Caco-2 (cell line): ENCODE measurements at regions of chr17 and their contacts with region 1.

Region 1: GRCh38 chr17:20184191-20184590 is 175.0 kb downstream of the SPECC1 start:
- DNase-seq: no peak
- H3K4me3 ChIP-seq: no peak overlapping the region
- H3K4me3 Mint-ChIP-seq: no peak overlapping the region
- H3K27ac Mint-ChIP-seq: no peak overlapping the region
- H3K4me1 ChIP-seq: peaks cover 7% of the 10 kb centered on the region
- H3K4me1 Mint-ChIP-seq: peaks cover 16% of the 10 kb centered on the region
- H3K27me3 ChIP-seq: no peaks in the 10 kb centered on the region
- H3K27me3 Mint-ChIP-seq: no peaks in the 10 kb centered on the region
- CTCF ChIP-seq: no peak

Region 2: GRCh38 chr17:20073055-20073979 is 110.9 kb before region 1 on chr17:
- CTCF ChIA-PET with region 1: no interaction called
- POLR2A ChIA-PET with region 1: no interaction called
- intact Hi-C with region 1: no loop called
- DNase-seq: no peak
- H3K4me3 ChIP-seq: no peak overlapping the region
- H3K4me3 Mint-ChIP-seq: no peak overlapping the region
- H3K27ac Mint-ChIP-seq: no peak overlapping the region
- H3K4me1 ChIP-seq: no peaks in the 10 kb centered on the region
- H3K4me1 Mint-ChIP-seq: no peaks in the 10 kb centered on the region
- H3K27me3 ChIP-seq: no peaks in the 10 kb centered on the region
- H3K27me3 Mint-ChIP-seq: peaks cover 20% of the 10 kb centered on the region
- CTCF ChIP-seq: no peak

Region 3: DNA sequence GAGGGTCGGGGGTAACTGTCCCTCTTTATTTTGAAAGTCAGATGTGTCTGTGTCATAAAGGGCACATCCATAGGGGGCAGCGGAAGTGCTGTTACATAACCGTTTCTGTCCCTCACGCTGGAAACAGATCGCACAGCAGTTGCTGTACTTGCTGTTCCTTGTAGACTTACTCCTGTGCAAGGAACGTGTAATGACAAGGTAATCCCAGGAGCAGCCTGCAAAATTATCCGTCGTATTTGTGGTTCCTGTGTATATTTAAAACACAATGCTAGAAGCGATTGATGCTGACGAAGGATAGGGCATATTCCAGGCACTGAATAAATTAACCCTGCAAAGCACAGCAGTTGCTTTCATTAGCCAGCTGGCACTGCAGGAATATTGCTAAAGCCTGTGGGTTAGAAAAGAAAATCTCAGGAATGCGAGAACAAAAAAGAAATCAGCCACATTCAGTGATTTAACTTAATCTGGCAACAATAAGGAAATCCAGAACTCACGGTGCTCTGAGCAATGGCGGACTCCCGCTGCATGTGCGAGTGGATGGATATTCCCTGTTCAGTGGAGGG is 98.8 kb before region 1 on chr17:
- CTCF ChIA-PET with region 1: no interaction called
- POLR2A ChIA-PET with region 1: no interaction called
- intact Hi-C with region 1: no loop called
- DNase-seq: no peak
- H3K4me3 ChIP-seq: no peak overlapping the region
- H3K4me3 Mint-ChIP-seq: no peak overlapping the region
- H3K27ac Mint-ChIP-seq: no peak overlapping the region
- H3K4me1 ChIP-seq: no peaks in the 10 kb centered on the region
- H3K4me1 Mint-ChIP-seq: no peaks in the 10 kb centered on the region
- H3K27me3 ChIP-seq: no peaks in the 10 kb centered on the region
- H3K27me3 Mint-ChIP-seq: peaks cover 15% of the 10 kb centered on the region
- CTCF ChIP-seq: no peak

Region 4: GRCh38 chr17:20141198-20141972 is 42.8 kb before region 1 on chr17:
- CTCF ChIA-PET with region 1: no interaction called
- POLR2A ChIA-PET with region 1: no interaction called
- intact Hi-C with region 1: no loop called
- DNase-seq: no peak
- H3K4me3 ChIP-seq: no peak overlapping the region
- H3K4me3 Mint-ChIP-seq: no peak overlapping the region
- H3K27ac Mint-ChIP-seq: no peak overlapping the region
- H3K4me1 ChIP-seq: no peaks in the 10 kb centered on the region
- H3K4me1 Mint-ChIP-seq: no peaks in the 10 kb centered on the region
- H3K27me3 ChIP-seq: no peaks in the 10 kb centered on the region
- H3K27me3 Mint-ChIP-seq: no peaks in the 10 kb centered on the region
- CTCF ChIP-seq: no peak

Region 5: GRCh38 chr17:20260692-20261091 is 76.5 kb after region 1 on chr17:
- CTCF ChIA-PET with region 1: no interaction called
- POLR2A ChIA-PET with region 1: interaction called, 11 read pairs
- intact Hi-C with region 1: no loop called
- DNase-seq: peak in 1 of 2 experiments; percentile 5
- H3K4me3 ChIP-seq: no peak overlapping the region
- H3K4me3 Mint-ChIP-seq: no peak overlapping the region
- H3K27ac Mint-ChIP-seq: peak overlapping the region; percentile 31
- H3K4me1 ChIP-seq: no peaks in the 10 kb centered on the region
- H3K4me1 Mint-ChIP-seq: no peaks in the 10 kb centered on the region
- H3K27me3 ChIP-seq: no peaks in the 10 kb centered on the region
- H3K27me3 Mint-ChIP-seq: no peaks in the 10 kb centered on the region
- CTCF ChIP-seq: no peak